Calu3 (cell line): ENCODE measurements at regions of chr1 and their contacts with region 1.

Region 1: DNA sequence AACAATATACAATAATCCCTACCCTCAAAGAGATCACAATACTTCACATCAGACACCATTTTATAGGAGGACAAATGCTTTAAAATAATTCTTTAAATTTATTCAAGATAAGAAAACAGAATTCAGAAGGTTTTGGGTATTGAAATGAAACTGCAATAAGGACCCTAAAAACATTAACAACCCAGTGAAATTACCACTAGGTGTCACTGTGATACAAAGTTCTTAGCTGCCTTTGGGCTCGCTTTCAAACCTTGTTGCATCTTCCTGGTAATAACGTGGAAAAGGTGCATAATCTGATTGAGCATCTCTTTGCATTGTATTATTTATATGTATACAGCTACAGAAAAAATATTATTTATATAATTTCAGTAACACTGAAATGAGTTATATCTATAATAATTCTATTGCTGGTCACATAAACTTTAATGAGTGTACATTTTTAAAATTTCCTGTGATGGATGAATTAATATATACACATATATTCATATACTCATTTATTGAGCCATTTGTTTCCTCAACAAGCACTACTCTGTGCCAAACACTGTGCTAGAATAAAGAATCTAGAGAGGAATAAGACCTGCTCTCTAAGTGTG is 185.2 kb downstream of the FAF1 start:
- DNase-seq: peak; percentile 12
- H3K4me3 Mint-ChIP-seq: no peak overlapping the region
- H3K27ac Mint-ChIP-seq: no peak overlapping the region
- H3K4me1 Mint-ChIP-seq: no peaks in the 10 kb centered on the region
- H3K27me3 Mint-ChIP-seq: no peaks in the 10 kb centered on the region
- CTCF ChIP-seq: no peak

Region 2: GRCh38 chr1:50724626-50725286 is 50.1 kb before region 1 on chr1:
- CTCF ChIA-PET with region 1: no interaction called
- intact Hi-C with region 1: no loop called
- DNase-seq: no peak
- H3K4me3 Mint-ChIP-seq: no peak overlapping the region
- H3K27ac Mint-ChIP-seq: no peak overlapping the region
- H3K4me1 Mint-ChIP-seq: no peaks in the 10 kb centered on the region
- H3K27me3 Mint-ChIP-seq: no peaks in the 10 kb centered on the region
- CTCF ChIP-seq: no peak

Region 3: DNA sequence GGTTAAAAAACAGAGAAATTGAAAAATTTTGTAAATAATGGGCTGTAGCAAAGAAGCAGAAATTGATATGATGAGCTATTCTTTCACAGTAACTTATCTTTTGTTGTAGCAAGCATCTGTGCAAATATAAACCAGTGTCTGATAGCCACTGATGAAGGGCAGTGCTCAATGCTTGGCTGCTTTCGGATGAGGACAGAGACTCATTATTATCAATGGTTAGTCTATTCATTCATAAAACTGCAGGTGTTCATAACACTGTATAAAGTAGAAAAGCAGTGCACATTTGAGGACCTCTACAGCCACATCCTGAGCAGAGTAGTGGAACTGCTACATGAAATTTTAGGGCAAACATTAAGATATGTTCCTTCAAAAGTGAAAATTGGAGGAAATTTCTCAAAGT is 78.0 kb after region 1 on chr1:
- CTCF ChIA-PET with region 1: no interaction called
- intact Hi-C with region 1: loop called (anchors 5 kb)
- DNase-seq: no peak
- H3K4me3 Mint-ChIP-seq: no peak overlapping the region
- H3K27ac Mint-ChIP-seq: no peak overlapping the region
- H3K4me1 Mint-ChIP-seq: peaks cover 26% of the 10 kb centered on the region
- H3K27me3 Mint-ChIP-seq: no peaks in the 10 kb centered on the region
- CTCF ChIP-seq: no peak

Region 4: DNA sequence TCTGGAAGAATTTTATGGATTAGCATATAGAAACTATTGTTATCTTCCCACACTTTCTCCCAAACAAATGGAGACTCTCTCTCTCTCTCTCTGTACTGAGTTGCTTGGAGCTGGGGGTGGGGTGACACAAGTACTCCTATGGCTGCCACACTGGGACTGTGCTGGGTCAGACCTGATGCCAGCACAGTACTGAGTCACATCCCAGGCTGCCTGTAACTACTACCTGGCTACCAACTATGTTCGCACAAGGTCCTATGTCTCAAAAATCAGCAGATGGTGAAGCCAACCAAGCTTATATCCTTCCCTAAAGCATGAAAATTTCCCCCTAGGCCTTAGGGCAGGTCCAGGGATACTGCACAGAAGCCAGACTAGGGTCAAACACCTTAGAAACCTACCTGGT is 118.6 kb after region 1 on chr1:
- CTCF ChIA-PET with region 1: no interaction called
- intact Hi-C with region 1: no loop called
- DNase-seq: no peak
- H3K4me3 Mint-ChIP-seq: no peak overlapping the region
- H3K27ac Mint-ChIP-seq: no peak overlapping the region
- H3K4me1 Mint-ChIP-seq: no peaks in the 10 kb centered on the region
- H3K27me3 Mint-ChIP-seq: no peaks in the 10 kb centered on the region
- CTCF ChIP-seq: no peak

Region 5: GRCh38 chr1:50959913-50960844 is 185.3 kb after region 1 on chr1 and contains the start of gene FAF1:
- CTCF ChIA-PET with region 1: interaction called, 7 read pairs
- intact Hi-C with region 1: loop called (anchors 10 kb)
- DNase-seq: peak; percentile 98
- H3K4me3 Mint-ChIP-seq: peak within 1 kb of the TSS; percentile 83
- H3K27ac Mint-ChIP-seq: peak within 1 kb of the TSS; percentile 67
- H3K4me1 Mint-ChIP-seq: peaks cover 18% of the 10 kb centered on the region
- H3K27me3 Mint-ChIP-seq: no peaks in the 10 kb centered on the region
- CTCF ChIP-seq: peak; percentile 51
- total RNA-seq, gene FAF1: 94.8 and 104 TPM in 2 replicates

Region 6: GRCh38 chr1:51044834-51045233 is 270.0 kb after region 1 on chr1:
- CTCF ChIA-PET with region 1: no interaction called
- intact Hi-C with region 1: loop called (anchors 10 kb)
- DNase-seq: no peak
- H3K4me3 Mint-ChIP-seq: no peak overlapping the region
- H3K27ac Mint-ChIP-seq: no peak overlapping the region
- H3K4me1 Mint-ChIP-seq: no peaks in the 10 kb centered on the region
- H3K27me3 Mint-ChIP-seq: no peaks in the 10 kb centered on the region
- CTCF ChIP-seq: no peak